ENCODE measurements at regions of chr6 and their contacts with region 1.

Region 1: GRCh38 chr6:70310063-70310694 is 7.3 kb upstream of the COL9A1 start:
- DNase-seq: no peak
- ATAC-seq: no peak
- H3K4me3 Mint-ChIP-seq: no peak overlapping the region
- H3K27ac Mint-ChIP-seq: no peak overlapping the region
- H3K4me1 Mint-ChIP-seq: no peaks in the 10 kb centered on the region
- H3K27me3 Mint-ChIP-seq: peaks cover 11% of the 10 kb centered on the region
- CTCF ChIP-seq: no peak

Region 2: DNA sequence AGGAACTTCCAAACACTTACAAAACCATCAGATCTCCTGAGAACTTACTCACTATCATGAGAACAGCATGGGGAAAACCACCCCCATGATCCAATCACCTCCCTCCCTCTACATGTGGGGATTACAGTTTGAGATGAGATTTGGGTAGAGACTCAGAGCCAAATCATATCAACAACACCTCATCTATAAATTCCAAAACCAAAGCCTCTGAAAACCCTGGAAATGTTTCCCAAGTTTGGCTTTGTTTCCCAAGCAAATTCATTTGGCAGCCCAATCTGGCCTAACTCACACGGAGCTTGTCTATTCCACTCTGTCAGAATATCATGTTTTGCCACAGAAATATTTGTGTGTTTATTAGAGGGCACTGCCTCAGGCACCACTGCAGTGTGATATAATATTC is 149.9 kb before region 1 on chr6:
- CTCF ChIA-PET with region 1: no interaction called
- POLR2A ChIA-PET with region 1: no interaction called
- intact Hi-C with region 1: no loop called
- DNase-seq: no peak
- ATAC-seq: no peak
- H3K4me3 Mint-ChIP-seq: no peak overlapping the region
- H3K27ac Mint-ChIP-seq: no peak overlapping the region
- H3K4me1 Mint-ChIP-seq: no peaks in the 10 kb centered on the region
- H3K27me3 Mint-ChIP-seq: no peaks in the 10 kb centered on the region
- CTCF ChIP-seq: no peak

Region 3: DNA sequence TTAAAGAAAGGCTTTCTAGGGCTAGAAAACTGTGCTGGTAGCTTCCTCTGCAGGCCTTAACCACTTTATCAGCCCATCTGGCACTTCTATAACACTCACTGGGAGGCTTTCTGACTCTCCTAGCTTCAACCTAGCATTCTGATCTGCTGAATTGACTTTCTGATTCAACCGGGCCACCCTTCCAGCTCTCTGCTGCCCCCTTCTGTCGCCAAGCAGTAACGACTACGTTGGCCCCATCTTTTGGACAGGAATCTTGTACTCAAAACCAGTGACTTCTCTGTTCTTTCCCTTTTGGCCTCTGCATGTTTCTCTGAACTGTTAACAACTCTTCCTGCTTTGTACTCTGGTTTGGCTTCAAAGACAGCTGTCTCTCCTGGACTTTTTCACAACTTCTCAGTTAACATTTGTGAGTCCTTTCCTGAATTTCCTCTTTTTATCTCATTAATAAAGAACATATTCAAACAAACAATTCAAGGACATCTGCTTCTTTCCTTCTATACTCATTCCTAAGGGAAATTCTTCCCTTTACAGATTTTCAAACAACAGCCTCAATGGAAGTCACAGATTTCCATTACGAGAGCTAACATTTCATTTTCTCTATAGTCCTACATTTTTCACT is 59.3 kb after region 1 on chr6:
- CTCF ChIA-PET with region 1: interaction called, 33 read pairs
- POLR2A ChIA-PET with region 1: no interaction called
- intact Hi-C with region 1: loop called (anchors 1 kb)
- DNase-seq: peak; percentile 27
- ATAC-seq: peak; percentile 92
- H3K4me3 Mint-ChIP-seq: no peak overlapping the region
- H3K27ac Mint-ChIP-seq: no peak overlapping the region
- H3K4me1 Mint-ChIP-seq: no peaks in the 10 kb centered on the region
- H3K27me3 Mint-ChIP-seq: peaks cover 21% of the 10 kb centered on the region
- CTCF ChIP-seq: peak; percentile 73

Measured in activated B cell treated with CpG ODN at 0.5 μM for 24 hours (primary cell).